AG04449 (cell line): ENCODE measurements at regions of chr12 and their contacts with region 1.

Region 1: DNA sequence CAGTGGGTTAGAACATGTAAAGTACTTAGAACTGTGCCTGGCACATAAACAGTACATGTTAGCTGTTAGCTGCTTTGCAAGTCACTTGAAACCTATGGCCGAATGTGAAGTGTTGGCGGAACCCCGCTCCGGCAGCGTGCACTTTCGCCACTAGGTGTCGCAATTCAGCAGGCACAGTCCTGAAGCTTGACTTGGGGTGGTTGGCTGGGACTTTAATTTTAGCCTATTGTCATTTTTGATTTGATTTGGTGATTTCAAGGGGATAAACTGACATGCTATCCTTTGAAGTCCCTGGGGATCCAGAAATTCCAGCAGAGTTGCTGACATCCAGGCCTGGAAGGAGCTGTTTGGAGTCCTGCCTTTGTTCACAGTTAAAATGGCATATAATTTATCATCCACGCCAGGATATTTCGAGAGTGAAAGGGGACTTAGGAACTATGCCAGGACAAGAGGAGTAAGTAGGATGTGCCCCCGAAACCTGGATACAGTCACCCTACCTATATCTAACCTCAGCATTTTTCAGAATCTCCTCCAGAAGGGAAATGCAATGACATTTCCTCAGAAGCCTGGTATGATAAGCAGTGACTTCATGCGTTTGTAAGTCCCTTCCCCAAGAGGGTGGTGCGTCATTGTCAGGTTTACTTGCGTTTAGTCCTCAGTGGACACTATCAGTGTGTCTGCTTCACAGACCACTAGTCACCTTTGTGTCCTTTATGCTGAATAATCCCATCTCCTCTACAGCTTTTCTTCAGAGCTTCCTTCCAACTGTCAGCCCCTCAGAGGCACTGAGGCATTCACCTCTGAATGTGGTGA is 3.5 kb upstream of the TSPAN9 start:
- DNase-seq: peak; percentile 42
- H3K4me3 ChIP-seq: no peak overlapping the region
- CTCF ChIP-seq: peak; percentile 91

Region 2: DNA sequence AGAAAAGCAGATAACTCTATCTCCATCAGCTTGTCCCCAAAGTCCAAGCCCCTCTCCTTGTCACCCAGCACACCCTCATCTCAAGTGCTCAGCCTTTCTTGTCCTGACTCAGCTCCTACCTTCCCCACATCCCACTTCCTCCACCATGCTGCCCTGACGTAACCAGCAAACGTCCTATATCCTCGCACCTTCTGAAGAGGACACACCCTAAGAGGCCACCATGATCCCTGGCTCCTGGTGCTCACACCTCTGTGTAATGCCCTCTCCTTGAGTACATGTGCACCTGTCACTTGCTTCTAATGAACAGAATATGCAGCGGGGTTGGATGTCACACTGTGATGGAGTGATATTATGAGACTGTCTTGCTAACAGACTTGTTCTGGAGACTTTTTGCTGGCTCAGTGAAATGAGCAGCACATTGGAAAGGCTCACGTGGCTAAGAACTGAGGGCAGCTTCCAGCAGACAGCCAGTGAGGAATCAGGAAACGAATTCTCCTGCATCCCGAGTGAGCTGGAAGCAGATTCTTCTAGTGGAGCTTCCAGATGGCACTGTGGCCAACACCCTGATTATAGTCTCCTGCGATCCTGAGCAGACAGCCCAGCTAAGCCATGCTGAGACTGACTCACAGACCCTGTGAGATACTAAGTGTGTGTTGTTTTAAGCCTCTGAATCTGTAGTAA is 12.7 kb before region 1 on chr12:
- CTCF ChIA-PET with region 1: interaction called, 121 read pairs
- POLR2A ChIA-PET with region 1: no interaction called
- DNase-seq: peak; percentile 37
- H3K4me3 ChIP-seq: no peak overlapping the region; the same call in 1 of the 2 replicates
- CTCF ChIP-seq: no peak

Region 3: GRCh38 chr12:3097186-3097804 is 23.7 kb after region 1 on chr12:
- CTCF ChIA-PET with region 1: interaction called, 28 read pairs
- POLR2A ChIA-PET with region 1: no interaction called
- DNase-seq: no peak
- H3K4me3 ChIP-seq: no peak overlapping the region
- CTCF ChIP-seq: no peak

Region 4: DNA sequence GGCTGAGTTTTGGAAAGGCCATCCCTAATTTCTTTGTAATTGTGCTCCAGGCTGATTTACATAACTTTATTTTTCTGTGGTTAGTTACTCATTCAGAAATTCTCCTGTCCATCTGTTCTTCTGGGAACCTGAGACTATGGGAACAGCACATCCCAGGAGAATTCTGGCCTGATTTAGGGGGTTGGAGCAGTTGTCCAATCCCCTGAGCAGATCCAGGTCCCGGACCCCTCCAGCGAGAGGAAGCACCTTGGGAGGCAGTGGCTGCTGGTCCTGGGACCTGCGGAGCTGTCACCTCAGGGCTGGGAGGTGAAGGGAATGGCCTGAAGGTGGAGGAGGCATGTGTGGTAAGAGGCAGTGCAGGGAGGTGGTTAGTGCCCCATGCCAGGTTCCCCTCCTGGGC is 44.0 kb after region 1 on chr12:
- CTCF ChIA-PET with region 1: interaction called, 21 read pairs
- POLR2A ChIA-PET with region 1: no interaction called
- DNase-seq: peak; percentile 70
- H3K4me3 ChIP-seq: peak overlapping the region; percentile 27
- CTCF ChIP-seq: no peak

Region 5: GRCh38 chr12:3122835-3123678 is 49.4 kb after region 1 on chr12:
- CTCF ChIA-PET with region 1: interaction called, 21 read pairs
- POLR2A ChIA-PET with region 1: interaction called, 4 read pairs
- DNase-seq: no peak
- H3K4me3 ChIP-seq: no peak overlapping the region
- CTCF ChIP-seq: no peak